Heart left ventricle (tissue), 16 donors: ENCODE measurements at regions of chr1 and their contacts with region 1.

Region 1: GRCh38 chr1:15128520-15129313 is 24.8 kb upstream of the TMEM51 start:
- DNase-seq: peak; percentile 49 to 77 (median 65)
- ATAC-seq: peak; percentile 76 to 93 (median 88)
- H3K4me3 ChIP-seq: no peak overlapping the region
- H3K27ac ChIP-seq: no peak overlapping the region
- H3K4me1 ChIP-seq: peaks cover 0 to 5% (median 0%) of the 10 kb centered on the region in 12 donors
- H3K27me3 ChIP-seq: peaks cover 0 to 5% (median 0%) of the 10 kb centered on the region in 9 donors
- CTCF ChIP-seq: peak; percentile 69 to 93 (median 87)
- POLR2A ChIP-seq: no peak

Region 2: GRCh38 chr1:14869187-14869586 is 259.5 kb before region 1 on chr1:
- intact Hi-C with region 1: no loop called
- DNase-seq: no peak
- ATAC-seq: no peak
- H3K4me3 ChIP-seq: no peak overlapping the region
- H3K27ac ChIP-seq: no peak overlapping the region
- H3K4me1 ChIP-seq: no peaks in the 10 kb centered on the region
- H3K27me3 ChIP-seq: peaks cover 0 to 36% (median 0%) of the 10 kb centered on the region in 9 donors
- CTCF ChIP-seq: no peak
- POLR2A ChIP-seq: no peak

Region 3: DNA sequence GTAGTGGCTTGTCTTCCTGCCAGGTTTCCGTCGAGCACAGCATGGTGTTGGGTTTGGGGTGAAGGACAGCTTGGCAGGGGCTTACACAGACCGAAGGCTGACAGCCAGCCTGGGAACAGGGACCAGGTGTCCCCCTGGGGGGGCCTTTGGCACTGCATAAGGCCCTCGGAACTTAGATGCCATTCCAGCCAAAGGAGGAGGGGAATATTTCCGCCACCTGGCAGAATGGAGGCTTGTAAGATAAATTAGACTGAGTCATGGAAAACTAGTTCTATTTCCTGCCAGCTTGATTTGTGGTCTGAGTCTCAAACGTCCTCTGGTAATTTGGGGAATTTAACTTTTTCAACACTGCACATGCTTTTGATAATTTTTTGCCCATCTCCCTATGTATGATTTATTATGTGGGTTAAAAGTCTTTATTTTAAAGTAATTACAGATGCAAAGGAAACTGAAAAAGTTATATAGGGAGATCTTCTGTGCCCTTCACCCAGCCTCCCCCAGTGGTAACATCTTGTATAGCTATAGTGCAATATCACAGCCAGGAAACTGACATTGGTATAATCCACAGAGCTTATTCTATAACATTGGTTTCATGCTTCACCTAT is 13.3 kb after region 1 on chr1:
- intact Hi-C with region 1: no loop called
- DNase-seq: peak in 4 of 5 donors; percentile 30 to 85 (median 54)
- ATAC-seq: peak; percentile 68 to 92 (median 86)
- H3K4me3 ChIP-seq: no peak overlapping the region
- H3K27ac ChIP-seq: peak overlapping the region in 1 of 12 donors; percentile 63
- H3K4me1 ChIP-seq: peaks cover 0 to 18% (median 0%) of the 10 kb centered on the region in 12 donors
- H3K27me3 ChIP-seq: peaks cover 0 to under 1% (median 0%) of the 10 kb centered on the region in 9 donors
- CTCF ChIP-seq: peak in 1 of 12 donors; percentile 9
- POLR2A ChIP-seq: no peak

Region 4: DNA sequence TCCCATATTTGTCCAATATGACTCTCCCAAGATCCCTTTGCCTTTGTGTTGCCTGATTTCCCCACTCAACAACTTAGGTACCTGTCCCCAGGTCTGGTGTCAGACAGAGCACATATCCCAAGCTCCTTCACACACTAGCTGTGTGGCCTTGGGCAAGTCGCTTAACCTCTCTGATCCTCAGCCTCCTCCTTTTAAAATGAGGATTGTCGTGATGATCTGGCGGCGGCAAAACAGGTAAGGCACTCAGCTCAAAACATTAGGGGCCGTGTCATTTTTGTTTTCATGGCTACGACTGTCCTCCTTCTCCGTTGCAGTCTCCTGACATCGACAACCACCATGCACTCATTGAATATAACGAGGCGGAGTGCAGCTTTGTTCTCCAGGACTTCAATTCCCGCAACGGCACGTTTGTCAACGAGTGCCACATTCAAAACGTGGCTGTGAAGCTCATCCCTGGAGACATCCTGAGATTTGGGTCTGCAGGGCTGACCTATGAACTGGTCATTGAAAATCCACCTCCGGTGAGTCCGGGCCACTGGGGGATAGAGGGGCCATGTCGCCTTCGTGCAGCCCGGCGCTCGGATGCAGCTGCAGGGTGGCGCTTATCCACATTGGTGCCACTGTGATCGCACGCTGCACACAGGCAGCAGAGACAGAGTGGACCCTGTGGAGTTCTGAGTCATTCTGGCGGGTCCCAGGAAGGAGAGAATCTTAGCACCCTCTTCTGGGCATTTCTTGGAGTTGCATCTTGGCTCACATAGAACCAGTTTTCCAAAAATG is 143.5 kb after region 1 on chr1:
- intact Hi-C with region 1: loop called (anchors 1 to 5 kb)
- DNase-seq: peak in 4 of 5 donors; percentile 49 to 66 (median 53)
- ATAC-seq: peak in 3 of 4 donors; percentile 88 to 93 (median 92)
- H3K4me3 ChIP-seq: no peak overlapping the region
- H3K27ac ChIP-seq: no peak overlapping the region
- H3K4me1 ChIP-seq: peaks cover 0 to 20% (median 2%) of the 10 kb centered on the region in 12 donors
- H3K27me3 ChIP-seq: peaks cover 0 to 7% (median 0%) of the 10 kb centered on the region in 9 donors
- CTCF ChIP-seq: peak; percentile 56 to 84 (median 76)
- POLR2A ChIP-seq: no peak

Region 5: GRCh38 chr1:15304701-15305467 is 176.2 kb after region 1 on chr1:
- intact Hi-C with region 1: loop called (anchors 1 to 5 kb)
- DNase-seq: peak in 4 of 5 donors; percentile 34 to 78 (median 46)
- ATAC-seq: peak in 3 of 4 donors; percentile 57 to 69 (median 62)
- H3K4me3 ChIP-seq: no peak overlapping the region
- H3K27ac ChIP-seq: no peak overlapping the region
- H3K4me1 ChIP-seq: peaks cover 0 to 6% (median 0%) of the 10 kb centered on the region in 12 donors
- H3K27me3 ChIP-seq: no peaks in the 10 kb centered on the region
- CTCF ChIP-seq: peak; percentile 72 to 91 (median 83)
- POLR2A ChIP-seq: no peak